CD14-positive monocyte (primary cell): ENCODE measurements at regions of chr1 and their contacts with region 1.

Region 1: DNA sequence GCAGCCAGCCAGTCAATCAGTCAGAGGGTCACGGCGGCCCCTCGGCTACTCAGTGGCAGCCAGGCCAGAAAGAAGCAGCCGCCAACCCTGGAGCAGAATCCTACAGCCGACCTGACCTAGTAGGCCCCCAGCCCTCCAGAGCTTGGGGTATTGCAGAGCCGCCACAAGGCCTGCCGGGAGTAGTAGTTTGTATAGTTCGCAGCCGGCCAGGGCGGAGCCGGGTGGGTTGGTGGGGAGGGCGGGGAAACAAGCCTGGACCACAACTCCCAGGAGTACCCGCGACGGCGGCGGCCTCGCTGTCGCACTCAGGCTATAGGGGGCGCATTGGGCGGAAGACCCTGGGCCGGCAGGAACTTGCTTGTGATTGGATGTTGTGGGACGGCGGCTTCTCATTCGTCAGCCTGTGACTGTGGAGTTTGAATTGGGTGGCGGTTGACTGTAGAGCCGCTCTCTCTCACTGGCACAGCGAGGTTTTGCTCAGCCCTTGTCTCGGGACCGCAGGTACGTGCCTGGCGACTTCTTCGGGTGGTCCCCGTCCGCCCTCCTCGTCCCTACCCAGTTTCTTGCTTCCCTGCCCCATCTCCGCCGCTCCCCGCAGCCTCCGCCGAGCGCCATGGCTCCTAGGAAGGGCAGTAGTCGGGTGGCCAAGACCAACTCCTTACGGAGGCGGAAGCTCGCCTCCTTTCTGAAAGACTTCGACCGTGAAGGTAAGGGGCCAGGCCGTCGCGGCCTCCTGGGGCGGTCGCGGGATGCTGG is at the start of gene CDCA8:
- DNase-seq: peak; percentile 94 to 97 (median 95)
- H3K4me3 ChIP-seq: peak within 1 kb of the TSS; percentile 67 to 99 (median 87)
- H3K4me3 Mint-ChIP-seq: peak within 1 kb of the TSS; percentile 91 to 95
- H3K27ac ChIP-seq: peak within 1 kb of the TSS; percentile 53 to 72
- H3K27ac Mint-ChIP-seq: peak within 1 kb of the TSS; percentile 73 to 93 (median 88)
- H3K4me1 ChIP-seq: peaks cover 29% of the 10 kb centered on the region in 2 donors
- H3K4me1 Mint-ChIP-seq: peaks cover 25% of the 10 kb centered on the region
- H3K27me3 ChIP-seq: no peaks in the 10 kb centered on the region
- H3K27me3 Mint-ChIP-seq: peaks cover 0 to 1% (median 0%) of the 10 kb centered on the region in 3 donors
- CTCF ChIP-seq: peak; percentile 25
- polyA plus RNA-seq, gene CDCA8: 0.09 to 0.67 (median 0.60) TPM

Region 2: DNA sequence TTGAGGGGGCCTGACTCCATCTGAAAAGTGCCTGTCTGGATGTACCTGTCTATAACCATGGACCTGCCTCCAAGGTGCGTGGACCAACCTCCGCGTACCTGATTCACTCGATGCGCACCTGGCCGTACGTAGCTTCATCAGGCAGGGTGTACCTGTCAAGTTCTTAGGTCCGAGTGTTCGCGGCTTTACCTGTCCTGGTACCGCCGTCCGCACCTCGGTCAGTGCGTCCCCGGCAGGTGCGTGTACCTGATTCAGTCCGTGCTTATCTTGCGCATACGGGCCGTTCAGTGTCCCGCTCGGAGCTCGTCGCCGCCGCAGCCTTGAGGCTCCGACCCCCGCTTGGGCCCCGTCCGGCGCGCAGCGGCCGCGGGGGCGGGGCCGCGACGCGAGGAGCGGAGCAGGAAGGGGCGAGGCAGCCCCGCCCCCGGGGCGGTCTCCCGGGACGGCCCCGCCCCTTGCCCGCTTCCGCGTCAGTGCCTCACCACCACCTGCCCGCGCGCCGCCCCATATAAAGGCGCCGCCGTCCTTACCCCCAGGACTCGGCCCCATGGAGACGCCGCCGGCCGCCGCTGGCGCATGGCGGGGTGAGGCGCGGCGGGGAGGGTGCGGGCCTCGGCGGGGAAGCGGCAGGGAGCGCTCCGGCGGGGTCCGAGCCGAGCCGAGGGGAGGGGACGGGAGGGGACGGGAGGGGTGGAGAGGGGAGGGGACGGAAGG is 218.1 kb before region 1 on chr1 and contains the start of gene ZC3H12A:
- intact Hi-C with region 1: loop called in 1 of 2 experiments (anchors 5 kb)
- DNase-seq: peak; percentile 92 to 95 (median 93)
- H3K4me3 ChIP-seq: peak within 1 kb of the TSS; percentile 79 to 98 (median 91)
- H3K4me3 Mint-ChIP-seq: peak within 1 kb of the TSS; percentile 86 to 91
- H3K27ac ChIP-seq: peak within 1 kb of the TSS; percentile 96 to 99
- H3K27ac Mint-ChIP-seq: peak within 1 kb of the TSS; percentile 79 to 98 (median 95)
- H3K4me1 ChIP-seq: peaks cover 70 to 76% of the 10 kb centered on the region in 2 donors
- H3K4me1 Mint-ChIP-seq: peaks cover 77% of the 10 kb centered on the region
- H3K27me3 ChIP-seq: no peaks in the 10 kb centered on the region
- H3K27me3 Mint-ChIP-seq: peaks cover 2 to 15% (median 7%) of the 10 kb centered on the region in 3 donors
- CTCF ChIP-seq: no peak
- polyA plus RNA-seq, gene ZC3H12A: 5.2 to 155 (median 5.8) TPM

Region 3: DNA sequence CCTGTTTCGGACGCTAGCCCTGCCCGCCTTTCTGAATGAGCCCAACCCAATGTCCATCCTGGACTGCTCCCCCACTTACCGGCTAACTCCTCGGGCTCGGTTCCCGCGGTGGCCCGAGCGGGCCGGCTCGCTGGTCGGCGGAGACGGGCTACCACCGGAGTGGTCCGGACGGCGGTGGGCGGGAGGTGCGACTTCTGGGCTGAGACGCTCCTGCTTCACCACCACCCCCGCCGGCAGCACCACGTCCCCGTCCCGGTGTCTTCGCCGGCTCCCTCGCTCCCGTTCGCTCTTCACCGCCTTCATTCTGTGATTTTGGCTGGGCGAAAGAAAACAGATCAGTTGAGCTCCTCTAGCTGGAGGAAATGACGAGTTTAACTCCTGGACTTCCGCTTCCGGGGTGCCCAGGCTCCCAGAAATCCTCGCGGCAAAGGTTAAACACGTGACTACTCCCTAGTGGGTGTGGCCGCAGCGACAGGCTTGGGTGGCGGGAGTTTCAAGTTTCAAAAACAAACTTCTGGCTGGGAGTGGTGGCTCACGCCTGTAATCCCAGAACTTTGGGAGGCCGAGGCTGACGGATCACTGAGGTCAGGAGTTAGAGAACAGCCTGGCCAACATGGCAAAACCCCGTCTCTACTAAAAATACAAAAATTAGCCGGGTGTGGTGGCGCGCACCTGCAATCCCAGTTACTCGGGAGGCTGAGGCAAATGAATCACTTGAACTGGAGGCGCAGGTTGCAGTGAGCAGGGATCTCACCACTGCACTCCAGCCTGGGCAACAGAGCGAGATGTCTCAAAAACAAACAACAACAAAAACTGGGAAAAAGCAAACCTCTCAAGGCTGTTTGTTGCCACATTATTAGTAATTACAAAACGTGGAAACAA is 138.1 kb before region 1 on chr1 and contains the start of gene SNIP1:
- intact Hi-C with region 1: loop called (anchors 2 to 5 kb)
- DNase-seq: peak; percentile 91 to 94 (median 93)
- H3K4me3 ChIP-seq: peak within 1 kb of the TSS; percentile 80 to 100 (median 80)
- H3K4me3 Mint-ChIP-seq: peak within 1 kb of the TSS; percentile 92 to 96
- H3K27ac ChIP-seq: peak within 1 kb of the TSS; percentile 79 to 98
- H3K27ac Mint-ChIP-seq: peak within 1 kb of the TSS; percentile 88 to 98 (median 96)
- H3K4me1 ChIP-seq: peaks cover 11 to 26% of the 10 kb centered on the region in 2 donors
- H3K4me1 Mint-ChIP-seq: peaks cover 24% of the 10 kb centered on the region
- H3K27me3 ChIP-seq: no peaks in the 10 kb centered on the region
- H3K27me3 Mint-ChIP-seq: no peaks in the 10 kb centered on the region
- CTCF ChIP-seq: no peak
- polyA plus RNA-seq, gene SNIP1: 1.6 to 6.8 (median 3.3) TPM

Region 4: DNA sequence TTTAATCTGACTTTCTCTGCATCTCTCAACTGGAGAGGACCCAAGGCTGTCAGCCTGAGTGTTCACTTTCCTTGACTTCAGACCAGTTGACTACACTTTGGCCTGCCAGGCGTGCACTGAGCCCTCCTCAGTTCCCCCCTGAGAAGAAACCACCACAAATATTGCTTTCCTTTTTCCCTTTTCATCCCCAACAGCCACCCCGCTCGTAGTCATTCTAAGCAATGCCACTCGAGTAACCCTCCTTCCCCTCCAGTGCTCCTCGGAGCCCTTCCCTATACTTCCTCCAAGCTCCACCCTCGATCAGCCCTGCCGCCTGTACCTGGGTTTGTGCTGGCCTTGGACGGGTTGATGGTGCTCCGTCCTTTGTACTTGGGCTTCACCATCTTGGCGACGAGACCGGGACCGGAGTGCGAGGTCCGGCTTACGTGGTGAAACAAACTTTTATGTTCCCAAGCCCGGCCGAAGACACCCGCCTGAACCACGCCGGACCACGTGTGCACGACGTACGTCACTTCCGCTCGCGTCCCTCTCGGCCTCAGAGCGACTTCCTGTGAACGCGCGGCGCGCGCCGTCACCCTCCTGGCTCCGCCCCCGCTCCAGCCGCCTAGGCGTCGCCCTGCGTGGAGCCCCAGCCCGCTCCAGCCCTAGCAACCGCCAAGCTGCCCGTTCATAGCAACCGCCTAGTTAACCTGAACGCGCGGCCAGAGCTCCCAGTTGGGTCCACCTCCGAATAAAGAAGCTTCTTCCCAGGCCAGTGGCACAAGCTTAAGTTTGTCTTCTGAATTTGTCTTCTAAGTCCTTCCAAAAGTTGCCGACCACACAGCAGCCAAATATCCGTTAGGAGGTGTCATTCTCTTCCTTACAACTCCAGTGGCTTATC is 96.6 kb before region 1 on chr1 and contains the start of gene GNL2:
- intact Hi-C with region 1: loop called in 1 of 2 experiments (anchors 2 kb)
- DNase-seq: peak; percentile 98
- H3K4me3 ChIP-seq: peak within 1 kb of the TSS; percentile 75 to 97 (median 89)
- H3K4me3 Mint-ChIP-seq: peak within 1 kb of the TSS; percentile 96 to 99
- H3K27ac ChIP-seq: peak within 1 kb of the TSS; percentile 90 to 97
- H3K27ac Mint-ChIP-seq: peak within 1 kb of the TSS; percentile 99 to 100 (median 99)
- H3K4me1 ChIP-seq: peaks cover 17 to 21% of the 10 kb centered on the region in 2 donors
- H3K4me1 Mint-ChIP-seq: peaks cover 19% of the 10 kb centered on the region
- H3K27me3 ChIP-seq: peaks cover 0 to 2% of the 10 kb centered on the region in 2 donors
- H3K27me3 Mint-ChIP-seq: peaks cover 0 to 4% (median 4%) of the 10 kb centered on the region in 3 donors
- CTCF ChIP-seq: no peak
- polyA plus RNA-seq, gene GNL2: 22.2 to 37.2 (median 35.4) TPM

Region 5: DNA sequence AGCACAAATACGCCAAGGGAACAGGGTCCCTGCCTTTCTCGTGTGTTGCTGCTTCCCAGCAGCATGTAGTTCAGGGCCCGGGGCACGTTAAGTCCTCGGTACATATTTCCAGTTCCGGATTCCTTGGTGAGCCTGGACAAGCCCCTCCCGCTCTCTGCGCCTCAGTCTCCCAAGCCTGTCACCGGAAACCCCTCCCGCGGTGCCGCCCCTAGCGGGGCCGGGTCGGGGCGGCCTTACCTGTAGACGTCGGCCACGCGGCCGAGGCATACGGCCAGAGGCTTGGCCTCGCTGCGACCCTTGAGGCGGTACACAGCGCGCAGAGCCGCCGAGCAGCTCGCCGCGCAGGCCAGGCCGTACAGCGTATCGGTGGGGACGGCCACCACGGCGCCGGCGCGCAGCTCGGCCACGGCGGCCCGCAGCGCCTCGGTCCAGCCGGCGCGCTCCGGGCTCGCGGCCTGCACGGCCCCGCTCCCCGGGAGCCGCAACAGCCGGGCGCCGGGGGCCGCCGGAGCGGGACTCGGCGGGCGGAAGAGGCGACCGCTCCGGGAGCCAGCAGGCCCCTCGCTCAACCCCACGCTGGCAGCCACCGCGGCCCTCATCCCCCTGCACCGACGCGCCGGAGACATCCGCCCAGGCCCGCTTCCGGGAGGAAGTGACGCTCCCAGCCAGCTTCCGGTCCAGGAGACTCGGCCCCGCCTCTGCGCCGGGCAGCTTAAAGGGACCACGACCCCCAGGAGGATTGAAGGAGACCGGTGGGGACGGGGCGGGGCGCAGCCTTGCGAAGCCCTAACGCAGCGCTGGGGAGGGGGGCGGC is 115.5 kb after region 1 on chr1 and contains the starts of genes C1orf122 and YRDC:
- intact Hi-C with region 1: loop called (anchors 5 kb)
- DNase-seq: peak; percentile 80 to 88 (median 87)
- H3K4me3 ChIP-seq: peak within 1 kb of the TSS; percentile 56 to 94 (median 92)
- H3K4me3 Mint-ChIP-seq: peak within 1 kb of the TSS; percentile 85 to 92
- H3K27ac ChIP-seq: peak within 1 kb of the TSS; percentile 61 to 95
- H3K27ac Mint-ChIP-seq: peak within 1 kb of the TSS; percentile 92 to 98 (median 97)
- H3K4me1 ChIP-seq: peaks cover 18 to 45% of the 10 kb centered on the region in 2 donors
- H3K4me1 Mint-ChIP-seq: peaks cover 39% of the 10 kb centered on the region
- H3K27me3 ChIP-seq: no peaks in the 10 kb centered on the region
- H3K27me3 Mint-ChIP-seq: no peaks in the 10 kb centered on the region
- CTCF ChIP-seq: no peak
- polyA plus RNA-seq, gene C1orf122: 15.5 to 29.5 (median 22.9) TPM
- polyA plus RNA-seq, gene YRDC: 10.4 to 29.6 (median 13.3) TPM

Region 6: DNA sequence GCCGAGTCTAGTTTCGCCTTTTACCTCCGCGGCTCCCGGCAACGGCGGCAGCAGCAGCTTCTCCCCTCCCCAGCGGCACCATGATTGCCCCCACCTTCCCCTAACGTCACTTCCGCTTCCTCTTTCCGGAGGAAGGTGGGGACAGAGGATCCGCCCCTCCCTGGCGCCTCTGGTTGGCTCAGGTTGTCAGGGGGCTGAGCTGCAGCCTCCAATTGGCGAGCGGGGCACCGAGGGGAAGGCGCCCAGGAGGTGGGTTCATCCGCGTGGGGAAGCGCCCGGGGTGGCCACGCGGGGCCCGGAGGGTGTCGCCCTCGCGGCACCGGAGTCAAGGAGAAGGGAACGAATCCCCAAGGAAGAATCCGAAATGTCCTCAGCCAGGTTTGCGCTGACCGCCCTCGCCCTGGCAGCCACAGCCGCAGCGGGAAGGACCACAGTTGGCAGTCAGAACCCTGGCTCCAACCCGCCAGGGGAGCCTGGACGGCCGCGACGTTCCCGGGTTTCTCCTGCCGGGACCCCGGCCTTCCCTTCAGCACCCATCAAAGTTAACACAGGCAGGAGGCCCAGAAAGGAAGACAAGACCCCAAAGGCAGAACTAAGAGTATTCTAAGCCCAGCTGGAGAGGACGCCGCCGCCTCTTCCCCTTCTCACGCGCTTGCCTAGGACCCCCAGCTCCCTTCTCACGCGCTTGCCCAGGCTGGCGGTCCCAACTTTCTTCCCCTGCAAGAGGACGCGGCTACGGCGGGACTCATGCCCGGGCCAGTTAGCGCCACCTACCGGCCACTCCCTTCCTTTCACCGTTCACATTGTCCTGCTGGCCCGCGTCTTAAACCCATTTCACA is 167.5 kb after region 1 on chr1 and contains the start of gene MTF1:
- intact Hi-C with region 1: loop called (anchors 2 to 5 kb)
- DNase-seq: peak; percentile 97 to 99 (median 99)
- H3K4me3 ChIP-seq: peak within 1 kb of the TSS; percentile 74 to 97 (median 95)
- H3K4me3 Mint-ChIP-seq: peak within 1 kb of the TSS; percentile 95
- H3K27ac ChIP-seq: peak within 1 kb of the TSS; percentile 88 to 99
- H3K27ac Mint-ChIP-seq: peak within 1 kb of the TSS; percentile 97 to 99 (median 98)
- H3K4me1 ChIP-seq: peaks cover 45 to 54% of the 10 kb centered on the region in 2 donors
- H3K4me1 Mint-ChIP-seq: peaks cover 44% of the 10 kb centered on the region
- H3K27me3 ChIP-seq: no peaks in the 10 kb centered on the region
- H3K27me3 Mint-ChIP-seq: no peaks in the 10 kb centered on the region
- CTCF ChIP-seq: peak; percentile 92
- polyA plus RNA-seq, gene MTF1: 17.1 to 41.0 (median 29.6) TPM

Region 7: DNA sequence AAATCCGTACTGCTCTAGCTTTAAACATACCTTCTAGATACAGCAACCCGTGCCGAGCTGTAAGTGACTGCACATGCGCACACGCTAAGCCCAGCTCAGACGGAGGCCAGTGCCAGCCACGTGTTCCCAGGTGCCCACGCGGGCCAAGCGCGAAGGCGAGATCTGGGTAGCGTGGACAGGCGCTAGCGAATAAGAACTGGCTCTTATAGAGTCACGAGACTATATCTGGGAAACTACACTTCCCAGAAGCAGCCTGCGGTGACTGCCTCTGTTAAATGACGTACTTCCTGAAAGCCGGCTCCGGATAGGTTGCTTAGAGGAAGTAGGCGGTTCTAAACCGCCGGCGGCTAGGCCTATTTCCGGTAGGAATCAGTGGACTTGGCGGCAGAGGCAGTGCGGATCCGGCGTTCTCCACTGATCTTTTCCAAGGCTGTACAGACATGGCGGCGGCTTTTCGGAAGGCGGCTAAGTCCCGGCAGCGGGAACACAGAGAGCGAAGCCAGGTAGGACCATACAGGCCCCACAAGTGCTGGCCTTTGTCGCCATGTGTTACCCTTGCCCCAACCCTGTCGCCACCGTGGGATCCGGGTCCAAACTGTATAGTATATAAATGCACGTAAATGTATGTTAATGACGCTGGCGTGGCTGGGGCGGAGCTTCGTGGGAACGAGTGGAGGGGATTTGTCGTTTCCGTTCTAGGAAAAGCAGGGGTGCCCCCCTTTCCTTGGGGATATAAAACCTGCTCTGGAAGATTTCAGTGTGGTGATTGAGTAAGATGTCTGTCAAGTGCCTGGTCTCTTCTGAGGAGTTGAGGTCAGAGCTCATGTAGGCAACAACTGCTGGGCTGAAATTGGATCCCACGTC is 320.3 kb after region 1 on chr1 and contains the start of gene UTP11:
- intact Hi-C with region 1: loop called (anchors 5 to 10 kb)
- DNase-seq: peak; percentile 96 to 100 (median 99)
- H3K4me3 ChIP-seq: peak within 1 kb of the TSS; percentile 81 to 84 (median 83)
- H3K4me3 Mint-ChIP-seq: peak within 1 kb of the TSS; percentile 97 to 99
- H3K27ac ChIP-seq: peak within 1 kb of the TSS; percentile 86 to 92
- H3K27ac Mint-ChIP-seq: peak within 1 kb of the TSS; percentile 96 to 99 (median 97)
- H3K4me1 ChIP-seq: peaks cover 38 to 46% of the 10 kb centered on the region in 2 donors
- H3K4me1 Mint-ChIP-seq: peaks cover 36% of the 10 kb centered on the region
- H3K27me3 ChIP-seq: no peaks in the 10 kb centered on the region
- H3K27me3 Mint-ChIP-seq: peaks cover 0 to 2% (median 0%) of the 10 kb centered on the region in 3 donors
- CTCF ChIP-seq: no peak
- polyA plus RNA-seq, gene UTP11: 10.9 to 26.0 (median 20.5) TPM